Dendritic cell treated with granulocyte-macrophage colony-stimulating factor and Interleukin-4, amounts not matched to agents 40 ng/mL and 50 ng/mL, for 4 days (primary cell): ENCODE measurements at regions of chr17 and their contacts with region 1.

Region 1: GRCh38 chr17:77140166-77140878 is 447 bp upstream of the SEC14L1 start:
- H3K4me3 Mint-ChIP-seq: peak overlapping the region; percentile 40
- H3K27ac Mint-ChIP-seq: peak overlapping the region; percentile 91
- H3K4me1 Mint-ChIP-seq: peaks cover 54% of the 10 kb centered on the region
- H3K27me3 Mint-ChIP-seq: no peaks in the 10 kb centered on the region

Region 2: GRCh38 chr17:76737082-76737675 is 403.1 kb before region 1 on chr17 and contains the start of gene SRSF2:
- intact Hi-C with region 1: loop called (anchors 2 kb)
- H3K4me3 Mint-ChIP-seq: peak within 1 kb of the TSS; percentile 92
- H3K27ac Mint-ChIP-seq: peak within 1 kb of the TSS; percentile 96
- H3K4me1 Mint-ChIP-seq: peaks cover 34% of the 10 kb centered on the region
- H3K27me3 Mint-ChIP-seq: no peaks in the 10 kb centered on the region

Region 3: DNA sequence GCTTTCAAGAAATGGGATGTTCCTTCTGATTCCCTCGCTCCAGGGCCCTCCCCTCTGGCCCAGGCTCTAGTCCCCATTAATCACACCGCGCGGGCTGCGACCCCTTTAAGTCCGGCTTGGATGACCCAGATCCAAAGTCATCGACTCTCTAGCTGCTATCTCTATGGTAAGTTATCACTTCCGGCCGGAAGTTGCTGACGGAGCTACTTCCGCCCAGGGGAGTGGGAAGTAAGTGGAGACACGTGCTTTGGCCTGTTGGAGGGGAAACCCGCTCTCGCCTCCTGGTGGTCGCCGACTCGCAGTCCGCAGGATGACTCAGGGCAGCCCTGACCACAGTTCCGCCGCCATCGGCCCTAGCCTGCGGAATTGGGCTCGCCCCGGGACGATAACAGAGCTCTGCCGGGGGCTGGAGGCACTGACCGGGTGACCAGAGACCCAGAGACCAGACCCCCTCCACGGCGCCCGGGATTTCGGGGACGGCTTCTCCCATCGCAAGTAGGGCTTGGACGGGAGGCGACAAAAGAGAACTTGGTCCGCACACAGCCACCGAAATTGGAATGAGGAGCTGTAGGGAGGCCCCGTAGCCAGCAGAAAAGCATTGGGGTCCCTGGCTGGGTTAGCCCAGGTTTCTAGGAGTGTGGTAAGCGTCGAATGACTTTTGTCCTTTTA is 51.7 kb before region 1 on chr17:
- intact Hi-C with region 1: loop called (anchors 1 kb)
- H3K4me3 Mint-ChIP-seq: peak overlapping the region; percentile 94
- H3K27ac Mint-ChIP-seq: peak overlapping the region; percentile 99
- H3K4me1 Mint-ChIP-seq: peaks cover 43% of the 10 kb centered on the region
- H3K27me3 Mint-ChIP-seq: peaks cover 21% of the 10 kb centered on the region

Region 4: DNA sequence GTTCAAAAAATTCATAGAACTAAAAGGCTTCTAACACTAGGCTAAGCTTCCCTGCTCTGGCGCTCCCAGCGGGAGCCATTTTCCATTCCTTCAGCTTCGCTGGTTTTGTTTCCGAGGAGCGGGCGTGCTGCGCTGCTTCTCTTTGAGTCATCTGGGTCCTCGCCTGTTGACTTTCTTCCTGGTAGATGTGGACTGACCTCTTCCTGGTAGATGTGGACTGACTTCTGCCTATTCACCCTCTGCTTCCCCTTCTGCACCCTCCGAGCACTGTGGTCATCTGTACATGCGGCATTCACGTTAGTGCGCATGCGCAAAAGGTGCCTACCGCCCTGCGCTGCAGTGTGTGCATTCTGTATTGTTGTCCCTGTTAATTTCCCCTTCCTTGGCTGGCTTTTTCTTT is 40.3 kb before region 1 on chr17:
- intact Hi-C with region 1: loop called (anchors 1 kb)
- H3K4me3 Mint-ChIP-seq: peak overlapping the region; percentile 57
- H3K27ac Mint-ChIP-seq: peak overlapping the region; percentile 94
- H3K4me1 Mint-ChIP-seq: peaks cover 55% of the 10 kb centered on the region
- H3K27me3 Mint-ChIP-seq: no peaks in the 10 kb centered on the region

Region 5: GRCh38 chr17:77214743-77215142 is 74.4 kb after region 1 on chr17:
- intact Hi-C with region 1: no loop called
- H3K4me3 Mint-ChIP-seq: no peak overlapping the region
- H3K27ac Mint-ChIP-seq: no peak overlapping the region
- H3K4me1 Mint-ChIP-seq: peaks cover 35% of the 10 kb centered on the region
- H3K27me3 Mint-ChIP-seq: no peaks in the 10 kb centered on the region